ENCODE measurements at regions of chr13 and their contacts with region 1.

Region 1: DNA sequence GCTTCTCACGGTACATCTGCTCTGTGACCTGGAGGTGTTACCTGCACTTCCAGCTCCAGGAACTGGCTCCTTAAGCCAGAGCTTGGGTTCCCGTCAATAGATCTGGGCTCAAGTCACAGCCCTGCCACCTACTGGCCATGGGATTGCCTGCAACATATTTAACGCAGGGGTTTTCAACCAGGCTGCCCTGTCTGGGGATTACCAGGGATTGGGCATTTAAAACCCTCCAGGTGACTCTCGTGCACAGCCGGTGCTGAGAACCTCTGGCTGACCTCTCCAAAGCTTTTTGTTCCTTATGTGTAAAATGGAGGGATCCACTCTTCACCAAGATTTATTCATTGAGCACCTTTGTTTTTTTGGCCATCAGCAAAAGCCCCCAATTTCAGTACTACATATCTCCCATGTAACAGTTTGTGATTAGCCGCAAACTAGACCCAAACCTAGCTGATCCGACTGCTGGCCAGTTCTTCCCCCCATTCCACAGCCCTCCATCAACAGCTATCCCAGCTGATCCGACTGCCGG is 76.6 kb upstream of the STK24 start:
- DNase-seq: peak; percentile 83
- H3K4me3 Mint-ChIP-seq: no peak overlapping the region
- H3K27ac Mint-ChIP-seq: no peak overlapping the region
- H3K4me1 Mint-ChIP-seq: peaks cover 2% of the 10 kb centered on the region
- H3K27me3 Mint-ChIP-seq: peaks cover 11% of the 10 kb centered on the region

Region 2: DNA sequence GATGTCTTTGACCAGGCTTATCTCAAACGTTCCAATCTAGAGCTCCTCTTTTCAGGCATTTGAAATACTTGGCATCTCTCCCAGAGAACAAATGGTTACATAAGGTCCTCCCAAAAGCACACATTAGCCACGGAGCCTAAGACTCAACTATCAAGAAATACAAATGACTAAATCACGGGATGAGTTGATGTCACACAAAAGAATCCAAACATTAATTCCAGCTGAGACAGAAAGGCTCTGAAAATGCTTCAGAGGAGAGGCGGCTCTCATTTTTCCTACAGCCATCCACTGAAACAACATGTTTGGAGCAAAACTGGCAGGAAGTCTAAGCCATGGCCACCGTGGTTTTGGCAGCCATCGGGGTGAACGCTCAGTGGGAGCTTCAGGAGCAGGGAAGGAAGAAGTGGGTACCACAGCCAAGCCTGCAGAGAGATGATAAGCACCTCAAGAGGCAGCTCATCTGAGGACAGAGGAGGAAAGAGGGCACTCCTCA is 199.1 kb before region 1 on chr13:
- CTCF ChIA-PET with region 1: interaction called, 20 read pairs
- DNase-seq: no peak
- H3K4me3 Mint-ChIP-seq: no peak overlapping the region
- H3K27ac Mint-ChIP-seq: peak overlapping the region; percentile 49
- H3K4me1 Mint-ChIP-seq: peaks cover 20% of the 10 kb centered on the region
- H3K27me3 Mint-ChIP-seq: no peaks in the 10 kb centered on the region

Region 3: GRCh38 chr13:98482476-98483444 is 170.8 kb before region 1 on chr13:
- CTCF ChIA-PET with region 1: interaction called, 13 read pairs
- DNase-seq: no peak
- H3K4me3 Mint-ChIP-seq: no peak overlapping the region
- H3K27ac Mint-ChIP-seq: no peak overlapping the region
- H3K4me1 Mint-ChIP-seq: peaks cover 73% of the 10 kb centered on the region
- H3K27me3 Mint-ChIP-seq: no peaks in the 10 kb centered on the region

Region 4: DNA sequence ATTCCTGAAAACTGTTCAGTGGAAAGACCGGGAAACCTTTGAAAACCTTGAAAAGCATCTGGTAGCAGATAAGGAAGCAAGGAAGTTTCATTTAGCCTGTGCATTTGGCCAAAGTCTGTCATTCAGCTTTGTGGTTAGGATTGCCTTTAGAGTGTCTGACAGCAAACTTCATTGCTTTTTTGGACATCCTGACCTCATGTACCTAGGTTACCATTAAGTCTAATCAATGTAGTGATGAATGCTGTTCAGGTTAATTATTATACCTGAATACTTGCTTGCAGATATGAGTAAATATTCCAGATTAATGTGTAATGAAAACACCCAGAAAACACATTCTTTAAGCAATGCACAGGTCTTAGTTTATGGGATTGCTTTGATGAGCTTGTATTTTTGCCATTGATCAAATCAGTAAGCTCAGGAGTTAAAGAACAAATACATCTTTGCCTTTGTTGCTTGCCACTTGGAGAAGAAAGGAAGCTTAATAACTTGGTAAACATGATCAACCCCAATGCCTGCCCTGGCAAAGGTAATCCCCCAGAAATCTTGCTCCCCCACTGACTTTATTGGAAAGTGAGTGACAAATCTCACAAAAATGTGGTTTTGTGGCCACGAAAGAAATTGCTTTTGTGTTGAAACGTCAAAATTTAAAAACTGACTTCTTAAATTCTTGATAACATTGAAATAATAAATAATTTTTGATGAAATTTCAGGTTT is 11.6 kb after region 1 on chr13:
- CTCF ChIA-PET with region 1: interaction called, 10 read pairs
- DNase-seq: no peak
- H3K4me3 Mint-ChIP-seq: no peak overlapping the region
- H3K27ac Mint-ChIP-seq: no peak overlapping the region
- H3K4me1 Mint-ChIP-seq: peaks cover 2% of the 10 kb centered on the region
- H3K27me3 Mint-ChIP-seq: peaks cover 16% of the 10 kb centered on the region

Region 5: DNA sequence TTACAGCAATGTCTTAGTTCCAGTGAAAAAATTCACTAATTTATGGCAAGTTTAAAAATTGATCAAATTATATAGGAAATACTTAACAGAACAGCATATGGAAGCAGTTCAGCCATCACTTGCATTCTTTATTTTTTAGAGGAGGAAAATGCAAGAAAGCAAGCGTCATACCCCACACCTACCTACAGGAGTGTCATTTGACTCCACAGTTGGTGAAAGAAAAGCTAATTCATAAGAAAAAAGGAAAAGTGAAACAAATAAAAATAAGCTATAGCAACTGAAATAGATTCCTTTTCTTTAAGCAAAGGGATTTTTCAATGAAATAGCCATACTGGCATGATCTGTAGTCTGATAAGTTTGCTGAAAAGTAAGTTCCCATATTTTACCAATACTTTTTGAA is 213.4 kb after region 1 on chr13:
- CTCF ChIA-PET with region 1: no interaction called
- DNase-seq: no peak
- H3K4me3 Mint-ChIP-seq: no peak overlapping the region
- H3K27ac Mint-ChIP-seq: no peak overlapping the region
- H3K4me1 Mint-ChIP-seq: peaks cover 16% of the 10 kb centered on the region
- H3K27me3 Mint-ChIP-seq: no peaks in the 10 kb centered on the region

Measured in activated naive CD4-positive, alpha-beta T cell treated with anti-CD3 and anti-CD28 coated beads, Interleukin-2, amount 10 ng/mL, durations not matched to agents 7 days and 5 days (primary cell).